Activated naive CD4-positive, alpha-beta T cell treated with anti-CD3 and anti-CD28 coated beads, Interleukin-2, amount 10 ng/mL, durations not matched to agents 7 days and 5 days (primary cell): ENCODE measurements at regions of chr14 and their contacts with region 1.

Region 1: GRCh38 chr14:50714450-50715073 is 46.5 kb upstream of the SAV1 start:
- DNase-seq: no peak
- H3K4me3 Mint-ChIP-seq: no peak overlapping the region
- H3K27ac Mint-ChIP-seq: no peak overlapping the region
- H3K4me1 Mint-ChIP-seq: no peaks in the 10 kb centered on the region
- H3K27me3 Mint-ChIP-seq: peaks cover 10% of the 10 kb centered on the region

Region 2: GRCh38 chr14:50726372-50727107 is 12.0 kb after region 1 on chr14:
- CTCF ChIA-PET with region 1: interaction called, 16 read pairs
- DNase-seq: peak; percentile 29
- H3K4me3 Mint-ChIP-seq: peak overlapping the region; percentile 11
- H3K27ac Mint-ChIP-seq: peak overlapping the region; percentile 91
- H3K4me1 Mint-ChIP-seq: peaks cover 32% of the 10 kb centered on the region
- H3K27me3 Mint-ChIP-seq: no peaks in the 10 kb centered on the region

Region 3: DNA sequence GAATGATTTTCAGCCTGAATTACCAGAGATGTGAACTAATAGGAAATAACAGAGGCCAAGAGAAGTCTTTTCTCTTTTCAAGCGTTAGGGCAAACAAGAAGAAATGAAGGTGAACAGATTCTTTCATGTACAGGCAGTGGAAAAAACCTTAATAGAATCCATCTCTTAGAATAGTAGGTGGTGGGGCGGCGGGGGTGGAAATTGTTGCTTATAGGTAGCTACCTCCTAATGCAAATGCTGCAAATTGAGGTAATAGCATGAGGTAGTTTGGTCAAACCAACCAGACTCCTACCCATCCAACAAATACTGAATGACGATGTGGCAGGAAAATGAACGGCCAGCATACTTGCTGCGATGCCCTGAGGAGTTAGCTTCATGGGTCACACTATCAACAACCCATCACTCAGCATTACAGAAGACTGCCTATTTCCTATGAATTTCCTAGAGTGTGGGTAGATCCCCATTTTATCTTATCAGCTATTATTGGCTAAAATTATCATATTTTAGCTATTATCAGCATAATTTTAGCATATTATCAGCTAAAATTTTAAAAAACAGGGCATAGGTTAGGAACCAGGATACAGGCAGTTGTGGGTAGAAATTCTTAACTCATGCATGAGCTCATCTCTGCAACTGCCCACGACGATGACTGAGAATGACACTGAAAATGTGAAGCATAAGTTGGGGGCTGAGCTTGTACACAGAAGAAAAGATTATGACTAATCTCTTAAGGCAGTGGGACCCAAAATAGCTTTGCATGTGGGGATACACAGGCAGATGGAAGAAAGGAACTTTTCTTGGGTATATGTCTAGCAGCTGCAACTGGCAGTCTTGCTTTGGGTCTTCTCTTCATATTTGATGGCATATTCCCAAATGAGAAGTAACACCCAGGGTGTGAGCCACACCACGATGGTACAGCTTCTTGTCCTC is 47.7 kb after region 1 on chr14:
- CTCF ChIA-PET with region 1: interaction called, 16 read pairs
- DNase-seq: no peak
- H3K4me3 Mint-ChIP-seq: no peak overlapping the region
- H3K27ac Mint-ChIP-seq: no peak overlapping the region
- H3K4me1 Mint-ChIP-seq: no peaks in the 10 kb centered on the region
- H3K27me3 Mint-ChIP-seq: no peaks in the 10 kb centered on the region